ENCODE measurements at regions of chr19 and their contacts with region 1.

Region 1: GRCh38 chr19:1241417-1242095 is at the start of gene ATP5F1D:
- DNase-seq: peak; percentile 95
- ATAC-seq: peak; percentile 66
- H3K4me3 ChIP-seq: peak within 1 kb of the TSS; percentile 76
- H3K27ac ChIP-seq: peak within 1 kb of the TSS; percentile 83
- H3K4me1 ChIP-seq: peaks cover 25% of the 10 kb centered on the region
- H3K27me3 ChIP-seq: no peaks in the 10 kb centered on the region
- CTCF ChIP-seq: no peak
- POLR2A ChIP-seq: peak; percentile 56; the same call in 1 of the 2 replicates
- RAD21 ChIP-seq: no peak
- total RNA-seq, gene ATP5F1D: 7.3 and 13.6 TPM in 2 replicates

Region 2: GRCh38 chr19:1009041-1009975 is 232.2 kb before region 1 on chr19:
- CTCF ChIA-PET with region 1: no interaction called
- POLR2A ChIA-PET with region 1: no interaction called
- dilution Hi-C with region 1: no loop called
- in situ Hi-C with region 1: no loop called
- intact Hi-C with region 1: loop called (anchors 2 kb)
- DNase-seq: peak; percentile 83
- ATAC-seq: peak; percentile 91
- H3K4me3 ChIP-seq: no peak overlapping the region
- H3K27ac ChIP-seq: peak overlapping the region; percentile 81
- H3K4me1 ChIP-seq: peaks cover 17% of the 10 kb centered on the region
- H3K27me3 ChIP-seq: no peaks in the 10 kb centered on the region
- CTCF ChIP-seq: 0 out of 2 replicates have a peak, but pooled peaks have one; percentile 3
- POLR2A ChIP-seq: no peak
- RAD21 ChIP-seq: no peak

Region 3: DNA sequence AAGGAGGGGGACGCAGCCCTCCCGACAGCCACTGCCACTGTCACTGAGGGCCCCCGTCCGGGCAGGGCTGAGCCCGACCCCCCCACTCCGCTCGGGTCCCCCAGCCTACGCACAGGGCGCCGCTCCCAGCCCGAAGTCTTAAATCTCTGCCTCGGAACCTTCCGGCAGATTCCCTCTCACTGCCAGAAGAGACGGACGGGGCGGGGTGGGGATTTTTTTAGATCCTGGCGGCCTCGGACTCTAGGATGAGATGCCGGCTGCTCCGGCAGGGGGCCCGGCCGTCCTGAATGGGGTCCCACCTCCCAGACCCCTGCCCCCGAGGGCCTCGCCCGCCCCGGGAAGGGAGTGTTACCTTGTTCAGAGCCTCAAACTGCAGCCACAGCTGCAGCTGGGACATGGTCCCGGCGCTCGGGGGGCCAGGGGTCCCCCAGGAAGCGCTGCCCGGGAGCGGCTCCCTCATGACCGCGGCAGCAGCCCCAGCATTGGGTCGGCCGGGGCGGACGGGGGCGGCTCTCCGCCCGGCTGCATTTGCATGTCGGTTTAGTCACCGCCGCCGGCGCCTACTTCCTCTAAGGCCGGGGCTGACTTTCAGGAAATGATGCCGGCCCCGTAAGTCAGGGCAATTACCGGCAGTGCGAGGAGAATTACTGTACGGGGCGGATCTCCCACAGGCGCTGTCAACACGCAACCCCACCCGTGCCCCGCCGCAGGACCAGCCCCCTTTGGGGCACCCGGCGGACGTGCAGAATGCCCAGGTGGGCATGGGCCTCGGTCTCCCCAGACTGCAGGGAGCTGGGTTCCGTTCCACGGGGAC is 109.6 kb before region 1 on chr19:
- CTCF ChIA-PET with region 1: no interaction called
- POLR2A ChIA-PET with region 1: no interaction called
- dilution Hi-C with region 1: no loop called
- in situ Hi-C with region 1: no loop called
- intact Hi-C with region 1: no loop called
- DNase-seq: peak; percentile 88
- ATAC-seq: peak; percentile 82
- H3K4me3 ChIP-seq: peak overlapping the region; percentile 61
- H3K27ac ChIP-seq: peak overlapping the region; percentile 95
- H3K4me1 ChIP-seq: peaks cover 24% of the 10 kb centered on the region
- H3K27me3 ChIP-seq: no peaks in the 10 kb centered on the region
- CTCF ChIP-seq: peak; percentile 14; the same call in 1 of the 2 replicates
- POLR2A ChIP-seq: peak; percentile 77; the same call in 1 of the 2 replicates
- RAD21 ChIP-seq: 0 out of 2 replicates have a peak, but pooled peaks have one; percentile 5

Region 4: DNA sequence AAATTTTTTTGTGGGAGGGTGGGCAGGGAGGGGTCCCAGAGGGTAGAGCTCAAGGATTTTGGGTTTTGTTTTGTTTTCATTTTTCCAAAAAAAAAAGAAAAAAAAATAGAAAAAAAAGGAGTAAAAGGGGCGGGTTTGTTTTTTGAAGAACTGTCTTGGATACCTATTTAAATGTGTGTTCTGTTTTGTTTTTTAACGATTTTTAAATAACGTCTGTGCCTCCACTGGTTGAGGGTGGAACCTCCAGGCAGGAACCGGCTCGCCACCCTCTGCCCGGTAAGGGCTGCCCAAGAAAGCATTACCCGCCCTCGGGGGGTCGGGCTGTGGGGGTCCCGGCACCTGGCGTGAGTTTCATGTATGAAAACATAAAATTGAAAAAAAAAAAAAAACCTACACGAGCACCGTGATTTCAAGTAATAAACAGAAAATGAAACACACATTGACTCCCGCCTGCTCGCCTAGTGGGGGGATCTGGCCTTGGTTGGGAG is 17.2 kb after region 1 on chr19:
- CTCF ChIA-PET with region 1: interaction called, 8 read pairs
- POLR2A ChIA-PET with region 1: interaction called, 11 read pairs
- dilution Hi-C with region 1: no loop called
- in situ Hi-C with region 1: no loop called
- intact Hi-C with region 1: no loop called
- DNase-seq: no peak
- ATAC-seq: no peak
- H3K4me3 ChIP-seq: no peak overlapping the region
- H3K27ac ChIP-seq: peak overlapping the region; percentile 74
- H3K4me1 ChIP-seq: peaks cover 57% of the 10 kb centered on the region
- H3K27me3 ChIP-seq: no peaks in the 10 kb centered on the region
- CTCF ChIP-seq: no peak
- POLR2A ChIP-seq: no peak
- RAD21 ChIP-seq: no peak

Region 5: DNA sequence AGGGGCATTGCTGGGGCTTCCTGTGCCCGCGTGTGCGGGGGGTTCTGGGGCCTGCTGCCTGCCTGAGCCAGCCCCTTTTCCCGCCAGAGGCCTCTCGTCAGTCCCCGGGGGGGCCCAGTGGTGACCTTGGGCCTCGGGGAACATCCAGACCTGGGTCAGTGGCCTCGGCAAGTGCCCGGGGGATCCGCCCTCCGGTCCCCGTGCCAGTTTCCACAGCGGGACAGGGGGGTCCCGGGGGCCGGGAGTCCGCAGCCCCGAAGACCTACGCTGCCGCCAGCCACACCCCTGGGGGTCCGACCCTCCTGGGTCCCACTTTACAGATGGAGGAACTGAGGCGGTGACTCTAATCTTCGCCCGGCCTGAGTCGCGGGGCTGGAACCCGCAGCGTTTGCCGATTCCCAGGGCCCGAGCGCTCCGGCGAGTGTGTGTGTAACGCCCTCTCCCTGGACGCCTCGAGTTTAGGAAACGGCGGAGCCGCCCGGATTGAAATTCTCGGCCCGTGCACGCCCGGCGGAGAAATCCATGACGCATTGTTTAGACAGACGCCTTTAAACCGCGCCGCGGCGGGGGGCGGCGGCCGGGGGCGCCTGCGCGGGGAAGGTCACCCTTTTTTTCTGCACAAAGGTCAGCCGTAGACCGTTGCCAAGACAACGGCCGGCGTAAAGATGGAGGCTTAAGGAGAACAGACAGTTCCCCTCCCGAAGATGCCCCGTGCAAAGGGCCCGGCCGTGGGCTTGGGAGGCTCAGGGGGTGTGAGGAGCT is 83.4 kb after region 1 on chr19:
- CTCF ChIA-PET with region 1: no interaction called
- POLR2A ChIA-PET with region 1: no interaction called
- dilution Hi-C with region 1: no loop called
- in situ Hi-C with region 1: no loop called
- intact Hi-C with region 1: no loop called
- DNase-seq: peak; percentile 61
- ATAC-seq: peak; percentile 94
- H3K4me3 ChIP-seq: peak overlapping the region; percentile 19
- H3K27ac ChIP-seq: no peak overlapping the region; the same call in 1 of the 2 replicates
- H3K4me1 ChIP-seq: peaks cover 2% of the 10 kb centered on the region; the same call in 1 of the 2 replicates
- H3K27me3 ChIP-seq: peaks cover 1% of the 10 kb centered on the region; the same call in 1 of the 2 replicates
- CTCF ChIP-seq: no peak
- POLR2A ChIP-seq: no peak
- RAD21 ChIP-seq: no peak

Measured in IMR-90 (cell line).